Mammary epithelial cell (primary cell): ENCODE measurements at regions of chr7 and their contacts with region 1.

Region 1: GRCh38 chr7:55065079-55065478 is 46.3 kb downstream of the EGFR start:
- DNase-seq: peak; percentile 89
- H3K4me3 ChIP-seq: no peak overlapping the region
- H3K27ac ChIP-seq: peak overlapping the region; percentile 97
- H3K4me1 ChIP-seq: peaks cover 71% of the 10 kb centered on the region
- H3K27me3 ChIP-seq: no peaks in the 10 kb centered on the region
- CTCF ChIP-seq: no peak

Region 2: DNA sequence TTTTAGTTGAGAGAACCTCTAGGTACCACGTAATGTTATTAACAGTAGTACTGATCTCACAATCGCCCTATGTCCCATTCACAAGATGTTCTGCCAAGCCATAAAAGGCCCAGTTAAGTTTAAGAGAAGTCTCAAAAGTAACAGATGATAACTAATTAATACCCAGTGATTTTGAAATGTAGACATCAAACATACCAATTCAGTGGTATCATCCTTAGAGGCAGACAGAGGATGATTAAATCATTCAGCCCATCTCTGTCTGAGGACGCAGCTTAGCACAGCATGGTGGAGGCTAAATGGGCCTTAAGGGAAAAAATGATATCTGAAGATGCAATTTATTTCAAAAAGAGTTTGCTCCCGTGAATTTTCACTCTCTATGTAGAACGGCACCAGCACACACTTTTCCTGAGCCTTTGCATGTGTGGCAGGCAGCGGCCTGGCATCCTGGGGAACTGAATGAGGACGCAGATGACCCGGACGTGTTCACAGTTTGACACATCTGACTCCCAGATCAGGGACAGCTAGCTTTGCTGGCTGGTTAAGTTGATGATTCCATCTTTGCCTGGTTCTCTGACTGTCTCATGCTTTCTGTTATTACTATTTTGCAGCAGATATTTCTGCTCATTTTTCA is 32.9 kb before region 1 on chr7:
- CTCF ChIA-PET with region 1: no interaction called
- dilution Hi-C with region 1: no loop called
- in situ Hi-C with region 1: no loop called
- intact Hi-C with region 1: no loop called
- DNase-seq: no peak
- H3K4me3 ChIP-seq: no peak overlapping the region
- H3K27ac ChIP-seq: no peak overlapping the region
- H3K4me1 ChIP-seq: peaks cover 24% of the 10 kb centered on the region
- H3K27me3 ChIP-seq: no peaks in the 10 kb centered on the region
- CTCF ChIP-seq: no peak

Region 3: DNA sequence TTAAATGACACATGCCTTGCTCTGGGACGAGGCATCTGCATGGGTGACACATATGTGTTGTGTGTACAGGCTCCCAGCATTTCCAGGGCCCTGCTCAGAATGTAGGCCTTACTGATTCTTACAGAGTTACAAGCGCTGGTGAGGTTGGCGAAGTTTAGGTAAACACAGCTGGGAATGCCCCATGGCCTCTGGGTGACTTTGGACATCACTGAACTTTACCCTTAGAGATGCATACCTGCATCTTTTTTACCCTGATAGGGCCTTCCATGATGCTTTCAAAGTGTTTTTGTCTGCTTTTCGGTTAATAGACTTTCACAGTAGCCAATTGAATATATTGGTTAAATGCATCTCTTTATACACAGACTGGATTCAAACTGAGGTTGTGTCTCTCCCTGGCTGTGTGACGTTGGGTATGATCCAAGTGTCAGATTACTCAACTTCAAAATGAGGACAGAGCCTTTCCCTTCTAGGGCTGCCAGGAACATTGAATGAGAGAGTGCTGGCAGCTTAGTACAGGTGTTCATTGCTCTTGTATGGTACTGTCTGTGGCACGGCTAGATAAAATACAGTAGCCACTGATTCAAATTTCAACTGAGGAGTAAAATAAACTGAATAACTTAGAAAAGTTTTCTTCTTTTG is 16.7 kb before region 1 on chr7:
- CTCF ChIA-PET with region 1: interaction called, 3 read pairs
- dilution Hi-C with region 1: no loop called
- in situ Hi-C with region 1: no loop called
- intact Hi-C with region 1: loop called (anchors 1 kb)
- DNase-seq: no peak
- H3K4me3 ChIP-seq: no peak overlapping the region
- H3K27ac ChIP-seq: peak overlapping the region; percentile 31
- H3K4me1 ChIP-seq: peaks cover 65% of the 10 kb centered on the region
- H3K27me3 ChIP-seq: no peaks in the 10 kb centered on the region
- CTCF ChIP-seq: no peak

Region 4: GRCh38 chr7:55109381-55110167 is 44.5 kb after region 1 on chr7:
- CTCF ChIA-PET with region 1: no interaction called
- dilution Hi-C with region 1: no loop called
- in situ Hi-C with region 1: no loop called
- intact Hi-C with region 1: loop called (anchors 2 kb)
- DNase-seq: peak; percentile 96
- H3K4me3 ChIP-seq: peak overlapping the region; percentile 4 to 35 (median 8)
- H3K27ac ChIP-seq: peak overlapping the region; percentile 91
- H3K4me1 ChIP-seq: peaks cover 96% of the 10 kb centered on the region
- H3K27me3 ChIP-seq: no peaks in the 10 kb centered on the region
- CTCF ChIP-seq: no peak

Region 5: DNA sequence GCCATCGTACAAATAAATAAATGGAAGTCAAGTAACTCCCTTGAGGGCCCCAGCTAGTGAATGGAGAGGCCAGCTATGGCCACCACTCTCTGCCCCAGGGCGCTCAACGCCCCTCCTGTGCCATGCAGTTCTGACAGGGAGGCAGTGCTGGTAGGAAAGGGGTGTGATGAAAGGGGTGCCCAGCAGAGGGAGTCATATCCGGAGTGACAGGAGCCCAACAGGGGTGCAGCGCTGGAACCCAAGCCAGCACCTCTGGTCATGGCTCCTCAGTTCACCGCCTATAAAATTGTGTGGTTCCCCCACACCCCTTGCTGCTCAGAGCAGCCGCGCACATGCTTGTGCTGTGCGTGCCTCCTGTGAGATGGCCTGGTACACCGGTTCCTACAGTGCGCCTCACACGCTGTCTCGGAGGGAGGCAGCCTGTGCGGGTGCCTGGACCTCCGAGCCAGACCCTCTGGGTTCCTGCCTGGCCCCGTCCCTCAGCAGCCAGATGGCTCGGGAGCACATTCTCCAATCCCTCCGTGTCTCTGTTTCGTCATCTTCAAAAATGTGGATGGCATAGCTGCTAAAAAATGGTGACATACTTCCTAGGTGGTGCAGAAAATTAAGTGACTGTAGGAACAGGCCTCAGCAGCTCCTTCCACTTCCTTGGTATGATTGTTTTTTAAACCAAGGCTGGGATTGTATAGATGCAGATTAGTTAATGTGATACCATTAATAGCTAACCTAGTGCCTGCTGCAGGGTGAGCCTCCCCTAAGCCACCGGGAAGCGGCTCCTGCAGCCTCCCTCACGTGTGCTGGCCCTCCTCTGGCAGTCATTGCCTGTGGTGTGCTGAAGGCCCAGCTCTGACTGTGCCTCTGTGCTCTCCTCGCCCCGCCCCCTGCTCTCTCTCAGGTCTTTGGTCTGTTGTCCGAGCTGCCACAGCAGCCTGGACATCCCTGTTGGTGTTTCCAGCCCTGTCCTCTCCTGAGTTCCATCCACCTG is 79.5 kb after region 1 on chr7:
- CTCF ChIA-PET with region 1: no interaction called
- dilution Hi-C with region 1: loop called (anchors 5 kb)
- in situ Hi-C with region 1: no loop called
- intact Hi-C with region 1: no loop called
- DNase-seq: no peak
- H3K4me3 ChIP-seq: no peak overlapping the region
- H3K27ac ChIP-seq: no peak overlapping the region
- H3K4me1 ChIP-seq: peaks cover 21% of the 10 kb centered on the region
- H3K27me3 ChIP-seq: no peaks in the 10 kb centered on the region
- CTCF ChIP-seq: peak; percentile 18 to 36